Activated CD4-positive, alpha-beta memory T cell treated with anti-CD3 and anti-CD28 coated beads for 36 hours (primary cell): ENCODE measurements at regions of chr6 and their contacts with region 1.

Region 1: DNA sequence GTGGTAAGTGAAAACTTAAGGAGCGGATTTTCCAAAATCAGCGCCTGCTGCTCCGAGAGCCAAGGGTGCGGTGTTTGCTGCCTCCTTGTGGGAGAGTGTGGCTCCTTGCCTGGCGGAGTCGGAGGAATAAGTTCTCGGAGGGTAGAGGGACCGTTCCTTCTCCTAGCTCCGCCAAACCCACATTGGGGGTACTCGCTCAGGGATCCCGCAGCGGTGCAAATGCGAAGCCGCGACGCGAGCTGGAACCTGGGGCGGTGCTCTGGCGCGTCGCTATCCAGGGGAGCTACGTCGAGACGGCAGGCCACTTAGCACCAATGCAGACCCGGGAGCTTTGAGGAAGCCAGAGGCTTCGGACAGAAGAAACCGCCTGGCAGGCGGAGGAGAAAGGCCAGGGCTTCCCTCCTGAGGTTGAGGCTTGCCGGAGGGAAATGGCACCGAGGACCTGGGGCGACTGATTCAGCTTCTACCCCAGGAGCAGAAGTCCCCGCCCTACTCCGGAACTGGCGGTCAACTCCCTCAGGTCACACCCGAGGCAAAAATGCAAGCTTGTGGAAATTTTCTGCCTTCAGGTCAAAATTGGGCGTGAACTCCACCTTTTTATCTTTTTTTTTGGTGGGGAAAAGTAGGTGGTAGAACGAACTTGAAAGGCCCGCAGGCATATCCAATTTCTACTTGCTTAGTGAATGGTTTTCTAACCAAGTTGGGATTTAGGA is 5.7 kb upstream of the DDX43 start:
- DNase-seq: peak; percentile 78
- H3K4me3 Mint-ChIP-seq: peak overlapping the region; percentile 83
- H3K27ac Mint-ChIP-seq: peak overlapping the region; percentile 69
- H3K4me1 Mint-ChIP-seq: peaks cover 17% of the 10 kb centered on the region
- H3K27me3 Mint-ChIP-seq: no peaks in the 10 kb centered on the region

Region 2: DNA sequence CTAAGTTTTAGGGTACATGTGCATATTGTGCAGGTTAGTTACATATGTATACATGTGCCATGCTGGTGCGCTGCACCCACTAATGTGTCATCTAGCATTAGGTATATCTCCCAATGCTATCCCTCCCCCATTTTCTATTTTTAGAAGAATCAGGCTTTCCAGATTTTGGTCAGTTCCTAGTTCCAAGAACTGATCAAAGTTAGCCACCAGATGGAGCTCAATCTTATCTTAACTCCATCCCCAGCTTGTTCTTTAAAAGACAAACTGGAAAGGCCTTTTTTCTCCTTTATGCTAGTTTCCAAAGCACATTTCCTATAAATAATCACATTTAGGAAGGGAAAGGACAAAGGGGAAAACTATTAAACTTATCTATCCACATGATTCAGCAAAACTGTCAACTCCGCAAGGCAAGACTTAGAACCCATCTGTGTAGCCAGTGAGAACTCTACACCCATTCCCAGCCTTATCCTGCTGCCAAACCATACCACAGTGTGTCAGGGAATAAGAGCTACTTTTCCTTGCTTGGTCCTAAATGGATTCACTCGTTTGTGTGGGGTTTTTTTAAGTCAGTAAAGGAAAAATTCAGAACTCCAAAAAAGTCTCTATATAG is 103.2 kb before region 1 on chr6:
- CTCF ChIA-PET with region 1: interaction called, 7 read pairs
- POLR2A ChIA-PET with region 1: no interaction called
- intact Hi-C with region 1: loop called (anchors 2 kb)
- DNase-seq: no peak
- H3K4me3 Mint-ChIP-seq: no peak overlapping the region
- H3K27ac Mint-ChIP-seq: no peak overlapping the region
- H3K4me1 Mint-ChIP-seq: no peaks in the 10 kb centered on the region
- H3K27me3 Mint-ChIP-seq: no peaks in the 10 kb centered on the region

Region 3: GRCh38 chr6:73309769-73310502 is 79.0 kb before region 1 on chr6:
- CTCF ChIA-PET with region 1: interaction called, 8 read pairs
- POLR2A ChIA-PET with region 1: no interaction called
- intact Hi-C with region 1: loop called (anchors 2 kb)
- DNase-seq: peak; percentile 77
- H3K4me3 Mint-ChIP-seq: peak overlapping the region; percentile 91
- H3K27ac Mint-ChIP-seq: peak overlapping the region; percentile 77
- H3K4me1 Mint-ChIP-seq: peaks cover 19% of the 10 kb centered on the region
- H3K27me3 Mint-ChIP-seq: peaks cover 18% of the 10 kb centered on the region

Region 4: GRCh38 chr6:73451223-73452107 is 62.5 kb after region 1 on chr6:
- CTCF ChIA-PET with region 1: interaction called, 8 read pairs
- POLR2A ChIA-PET with region 1: interaction called, 12 read pairs
- intact Hi-C with region 1: loop called (anchors 5 kb)
- DNase-seq: peak; percentile 61
- H3K4me3 Mint-ChIP-seq: peak overlapping the region; percentile 86
- H3K27ac Mint-ChIP-seq: peak overlapping the region; percentile 93
- H3K4me1 Mint-ChIP-seq: peaks cover 18% of the 10 kb centered on the region
- H3K27me3 Mint-ChIP-seq: no peaks in the 10 kb centered on the region